Activated naive CD4-positive, alpha-beta T cell treated with anti-CD3 and anti-CD28 coated beads for 36 hours (primary cell): ENCODE measurements at regions of chrX and their contacts with region 1.

Region 1: GRCh38 chrX:129982274-129983251 is at the start of gene BCORL1:
- DNase-seq: peak; percentile 90
- H3K4me3 Mint-ChIP-seq: no peak within 1 kb of the TSS
- H3K27ac Mint-ChIP-seq: no peak within 1 kb of the TSS
- H3K4me1 Mint-ChIP-seq: peaks cover 16% of the 10 kb centered on the region
- H3K27me3 Mint-ChIP-seq: no peaks in the 10 kb centered on the region
- total RNA-seq, gene BCORL1: 3.6 to 4.1 TPM

Region 2: DNA sequence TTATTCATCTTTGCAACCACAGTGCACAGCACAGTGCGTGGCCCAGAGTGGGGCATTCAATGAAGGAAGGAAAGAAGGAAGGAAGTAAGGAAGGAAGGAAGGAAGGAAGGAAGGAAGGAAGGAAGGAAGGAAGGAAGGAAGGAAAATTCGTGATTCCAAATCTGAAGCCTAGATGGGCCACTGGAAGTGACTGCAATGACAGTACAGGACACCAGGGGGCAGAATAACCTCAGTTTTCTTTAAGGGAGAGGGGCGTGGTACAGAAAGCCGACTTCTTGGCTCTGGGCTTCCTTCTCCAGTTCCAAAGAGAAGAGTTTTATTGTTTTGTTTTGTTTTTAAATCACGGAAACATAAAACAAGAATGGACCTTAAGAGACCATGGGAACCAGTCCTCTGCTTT is 375.6 kb before region 1 on chrX:
- CTCF ChIA-PET with region 1: no interaction called
- intact Hi-C with region 1: loop called (anchors 2 kb)
- DNase-seq: peak; percentile 68
- H3K4me3 Mint-ChIP-seq: no peak overlapping the region
- H3K27ac Mint-ChIP-seq: no peak overlapping the region
- H3K4me1 Mint-ChIP-seq: peaks cover 14% of the 10 kb centered on the region
- H3K27me3 Mint-ChIP-seq: no peaks in the 10 kb centered on the region

Region 3: DNA sequence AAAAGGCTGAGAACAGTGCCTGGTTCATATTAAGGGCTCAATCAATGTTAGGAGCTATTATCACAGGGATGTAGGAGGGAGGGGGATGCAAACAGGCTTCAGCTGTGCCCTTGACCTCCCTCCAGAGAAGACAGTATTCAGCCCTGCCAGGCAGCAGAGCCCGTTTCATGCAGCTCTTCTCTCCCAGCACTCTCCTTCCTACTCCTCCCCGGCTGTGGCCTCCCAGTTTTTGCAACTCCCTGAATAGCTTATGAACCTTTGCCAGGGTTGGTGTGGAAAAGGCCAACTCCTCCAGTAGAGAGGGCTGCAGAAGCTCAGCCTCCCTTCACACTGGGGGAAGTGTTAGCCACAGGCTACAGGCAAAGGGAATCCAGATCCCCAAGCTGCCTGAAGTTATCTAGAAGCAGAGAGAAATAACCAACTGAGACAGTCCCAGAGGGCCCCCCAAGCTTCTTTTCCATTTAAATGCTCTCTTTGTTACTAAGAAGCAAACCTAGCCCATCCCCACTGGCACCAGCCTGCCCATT is 296.1 kb before region 1 on chrX:
- CTCF ChIA-PET with region 1: no interaction called
- intact Hi-C with region 1: no loop called
- DNase-seq: no peak
- H3K4me3 Mint-ChIP-seq: no peak overlapping the region
- H3K27ac Mint-ChIP-seq: no peak overlapping the region
- H3K4me1 Mint-ChIP-seq: no peaks in the 10 kb centered on the region
- H3K27me3 Mint-ChIP-seq: no peaks in the 10 kb centered on the region

Region 4: GRCh38 chrX:129905787-129906580 is 76.6 kb before region 1 on chrX and contains the start of gene UTP14A:
- CTCF ChIA-PET with region 1: no interaction called
- intact Hi-C with region 1: loop called (anchors 1 kb)
- DNase-seq: peak; percentile 92
- H3K4me3 Mint-ChIP-seq: peak within 1 kb of the TSS; percentile 84
- H3K27ac Mint-ChIP-seq: peak within 1 kb of the TSS; percentile 82
- H3K4me1 Mint-ChIP-seq: peaks cover 31% of the 10 kb centered on the region
- H3K27me3 Mint-ChIP-seq: no peaks in the 10 kb centered on the region
- total RNA-seq, gene UTP14A: 21.5 to 22.6 TPM

Region 5: GRCh38 chrX:130024127-130024526 is 41.6 kb after region 1 on chrX:
- CTCF ChIA-PET with region 1: interaction called, 3 read pairs
- intact Hi-C with region 1: loop called (anchors 1 kb)
- DNase-seq: peak; percentile 92
- H3K4me3 Mint-ChIP-seq: peak overlapping the region; percentile 48
- H3K27ac Mint-ChIP-seq: peak overlapping the region; percentile 77
- H3K4me1 Mint-ChIP-seq: peaks cover 12% of the 10 kb centered on the region
- H3K27me3 Mint-ChIP-seq: no peaks in the 10 kb centered on the region

Region 6: GRCh38 chrX:130120746-130121504 is 138.4 kb after region 1 on chrX:
- CTCF ChIA-PET with region 1: no interaction called
- intact Hi-C with region 1: loop called (anchors 5 kb)
- DNase-seq: peak; percentile 77
- H3K4me3 Mint-ChIP-seq: peak overlapping the region; percentile 61
- H3K27ac Mint-ChIP-seq: no peak overlapping the region
- H3K4me1 Mint-ChIP-seq: peaks cover 15% of the 10 kb centered on the region
- H3K27me3 Mint-ChIP-seq: no peaks in the 10 kb centered on the region

Region 7: DNA sequence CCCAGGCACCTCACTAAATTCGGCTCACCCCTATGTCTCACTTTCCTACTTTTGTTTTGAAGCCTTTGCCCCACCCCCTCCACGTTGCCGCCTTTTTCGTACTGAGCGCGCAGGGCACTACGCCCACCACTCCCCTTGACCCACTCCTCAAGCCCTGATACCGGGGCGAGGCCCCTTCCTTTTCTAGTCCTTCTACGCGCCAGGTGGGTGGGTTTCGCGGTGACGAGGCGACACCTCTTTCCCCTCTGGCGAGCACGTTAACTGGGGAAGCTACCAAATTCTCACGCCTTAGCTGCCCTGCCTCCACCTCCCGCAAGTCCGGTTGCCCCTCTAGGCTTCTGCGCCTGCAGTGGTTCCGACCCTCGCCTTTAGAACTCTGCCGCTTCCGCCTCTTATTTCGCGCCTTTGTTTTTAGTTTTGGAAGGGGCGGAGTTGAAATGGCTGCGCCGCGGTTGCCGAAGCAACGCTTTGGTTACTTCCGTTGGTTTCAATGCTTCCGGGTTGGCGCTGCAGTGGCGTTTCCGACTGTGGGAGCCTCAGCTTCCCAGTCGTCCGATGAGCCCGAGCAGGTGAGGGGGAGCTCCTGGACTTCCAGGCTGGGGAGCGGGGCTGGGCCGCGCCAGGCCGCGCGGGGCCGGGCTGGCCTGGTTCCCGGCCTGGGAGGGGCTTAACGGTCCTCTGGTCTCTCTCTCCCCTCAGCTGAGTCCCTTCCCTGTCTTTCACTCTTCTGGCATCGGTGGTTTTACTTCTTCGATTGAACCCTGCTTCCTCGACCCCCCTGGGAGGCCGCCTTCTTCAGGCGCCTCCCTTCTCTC is 357.1 kb after region 1 on chrX and contains the start of gene SLC25A14:
- CTCF ChIA-PET with region 1: no interaction called
- intact Hi-C with region 1: loop called (anchors 2 kb)
- DNase-seq: peak; percentile 82
- H3K4me3 Mint-ChIP-seq: peak within 1 kb of the TSS; percentile 86
- H3K27ac Mint-ChIP-seq: peak within 1 kb of the TSS; percentile 89
- H3K4me1 Mint-ChIP-seq: peaks cover 13% of the 10 kb centered on the region
- H3K27me3 Mint-ChIP-seq: no peaks in the 10 kb centered on the region
- total RNA-seq, gene SLC25A14: 7.4 to 9.0 TPM